Calu3 (cell line): ENCODE measurements at regions of chr12 and their contacts with region 1.

Region 1: DNA sequence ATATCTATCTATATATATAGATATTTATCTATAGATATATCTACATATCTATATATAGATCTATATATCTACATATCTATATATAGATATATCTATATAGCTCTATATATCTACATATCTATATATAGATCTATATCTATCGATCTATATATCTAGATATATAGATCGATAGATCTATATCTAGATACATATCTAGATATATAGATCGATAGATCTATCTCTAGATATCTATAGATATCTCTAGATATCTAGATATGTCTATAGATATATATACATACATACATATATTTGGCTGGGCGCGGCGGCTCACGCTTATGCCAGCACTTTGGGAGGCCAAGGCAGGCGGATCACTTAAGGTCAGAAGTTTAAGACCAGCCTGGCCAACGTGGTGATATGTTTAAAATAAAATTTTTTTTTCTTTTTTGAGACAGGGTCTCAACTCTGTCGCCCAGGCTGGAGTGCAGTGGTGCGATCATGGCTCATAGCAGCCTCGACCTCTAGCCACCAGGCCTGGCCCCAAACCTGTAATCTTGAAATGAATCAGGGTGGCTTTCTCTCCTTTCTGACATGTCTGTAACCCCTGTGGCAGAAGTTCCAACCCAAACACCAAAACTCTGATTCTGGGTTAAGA is 18.1 kb downstream of the ARPC3 start:
- DNase-seq: no peak
- H3K4me3 Mint-ChIP-seq: peak overlapping the region; percentile 80
- H3K27ac Mint-ChIP-seq: peak overlapping the region; percentile 72
- H3K4me1 Mint-ChIP-seq: no peaks in the 10 kb centered on the region
- H3K27me3 Mint-ChIP-seq: no peaks in the 10 kb centered on the region
- CTCF ChIP-seq: no peak

Region 2: GRCh38 chr12:110039085-110039807 is 392.8 kb before region 1 on chr12:
- CTCF ChIA-PET with region 1: interaction called, 3 read pairs
- intact Hi-C with region 1: loop called (anchors 5 kb)
- DNase-seq: peak; percentile 62
- H3K4me3 Mint-ChIP-seq: peak overlapping the region; percentile 70
- H3K27ac Mint-ChIP-seq: peak overlapping the region; percentile 98
- H3K4me1 Mint-ChIP-seq: peaks cover 34% of the 10 kb centered on the region
- H3K27me3 Mint-ChIP-seq: no peaks in the 10 kb centered on the region
- CTCF ChIP-seq: no peak

Region 3: GRCh38 chr12:110330544-110330943 is 101.5 kb before region 1 on chr12:
- CTCF ChIA-PET with region 1: no interaction called
- intact Hi-C with region 1: no loop called
- DNase-seq: no peak
- H3K4me3 Mint-ChIP-seq: no peak overlapping the region
- H3K27ac Mint-ChIP-seq: peak overlapping the region; percentile 73
- H3K4me1 Mint-ChIP-seq: peaks cover 26% of the 10 kb centered on the region
- H3K27me3 Mint-ChIP-seq: no peaks in the 10 kb centered on the region
- CTCF ChIP-seq: no peak

Region 4: GRCh38 chr12:110367181-110367864 is 64.7 kb before region 1 on chr12:
- CTCF ChIA-PET with region 1: no interaction called
- intact Hi-C with region 1: no loop called
- DNase-seq: no peak
- H3K4me3 Mint-ChIP-seq: no peak overlapping the region
- H3K27ac Mint-ChIP-seq: no peak overlapping the region
- H3K4me1 Mint-ChIP-seq: no peaks in the 10 kb centered on the region
- H3K27me3 Mint-ChIP-seq: no peaks in the 10 kb centered on the region
- CTCF ChIP-seq: no peak

Region 5: GRCh38 chr12:110403146-110403975 is 28.7 kb before region 1 on chr12 and contains the start of gene ANAPC7:
- CTCF ChIA-PET with region 1: interaction called, 18 read pairs
- intact Hi-C with region 1: no loop called
- DNase-seq: peak; percentile 95
- H3K4me3 Mint-ChIP-seq: peak within 1 kb of the TSS; percentile 98
- H3K27ac Mint-ChIP-seq: peak within 1 kb of the TSS; percentile 99
- H3K4me1 Mint-ChIP-seq: no peaks in the 10 kb centered on the region
- H3K27me3 Mint-ChIP-seq: no peaks in the 10 kb centered on the region
- CTCF ChIP-seq: no peak
- total RNA-seq, gene ANAPC7: 111 and 136 TPM in 2 replicates